ENCODE measurements at regions of chr3 and their contacts with region 1.

Region 1: GRCh38 chr3:129824926-129825541 is 68.5 kb downstream of the TMCC1 start:
- DNase-seq: peak; percentile 39 to 52
- H3K4me3 ChIP-seq: no peak overlapping the region
- H3K27ac ChIP-seq: no peak overlapping the region
- H3K4me1 ChIP-seq: peaks cover 32% of the 10 kb centered on the region
- H3K27me3 ChIP-seq: no peaks in the 10 kb centered on the region
- CTCF ChIP-seq: peak; percentile 87

Region 2: GRCh38 chr3:128665362-128666038 is 1159.5 kb before region 1 on chr3:
- CTCF ChIA-PET with region 1: no interaction called
- POLR2A ChIA-PET with region 1: no interaction called
- intact Hi-C with region 1: no loop called
- DNase-seq: no peak
- H3K4me3 ChIP-seq: peak overlapping the region; percentile 21; the same call in 1 of the 2 replicates
- H3K27ac ChIP-seq: no peak overlapping the region
- H3K4me1 ChIP-seq: no peaks in the 10 kb centered on the region
- H3K27me3 ChIP-seq: no peaks in the 10 kb centered on the region
- CTCF ChIP-seq: no peak; the same call in 1 of the 2 replicates

Region 3: GRCh38 chr3:129128357-129129155 is 696.5 kb before region 1 on chr3:
- CTCF ChIA-PET with region 1: no interaction called
- POLR2A ChIA-PET with region 1: interaction called, 19 read pairs
- intact Hi-C with region 1: no loop called
- DNase-seq: no peak
- H3K4me3 ChIP-seq: no peak overlapping the region
- H3K27ac ChIP-seq: no peak overlapping the region
- H3K4me1 ChIP-seq: no peaks in the 10 kb centered on the region
- H3K27me3 ChIP-seq: no peaks in the 10 kb centered on the region
- CTCF ChIP-seq: no peak

Region 4: DNA sequence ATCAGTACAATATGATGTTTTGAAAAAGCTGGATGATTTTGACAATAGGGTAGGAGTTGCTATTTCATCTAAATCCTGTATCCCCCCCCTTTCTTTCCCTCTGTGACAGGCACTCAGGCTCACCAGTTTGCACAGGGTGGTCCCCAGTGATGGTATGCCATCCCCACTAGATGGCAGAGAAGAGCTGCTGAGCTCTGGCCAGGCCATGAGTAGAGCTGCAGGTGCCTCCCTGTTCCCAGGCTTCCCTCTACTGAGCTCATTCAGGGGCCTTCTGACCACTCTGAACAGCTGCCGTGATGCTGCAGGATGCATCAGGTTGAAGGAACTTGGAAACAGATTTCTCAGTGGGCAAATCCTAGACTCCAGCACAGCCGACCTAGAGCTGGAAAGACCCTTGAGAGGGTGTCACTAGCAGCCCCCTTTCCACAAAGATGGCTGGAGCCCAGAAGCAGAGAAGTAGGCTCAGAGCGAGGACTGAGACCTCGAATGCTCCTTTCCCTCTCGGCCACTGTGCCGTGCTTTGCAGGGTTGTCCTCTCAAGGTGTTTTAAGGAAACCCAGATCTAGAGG is 441.7 kb before region 1 on chr3:
- CTCF ChIA-PET with region 1: no interaction called
- POLR2A ChIA-PET with region 1: no interaction called
- intact Hi-C with region 1: loop called (anchors 1 kb)
- DNase-seq: peak; percentile 49 to 66
- H3K4me3 ChIP-seq: no peak overlapping the region
- H3K27ac ChIP-seq: no peak overlapping the region
- H3K4me1 ChIP-seq: peaks cover 6% of the 10 kb centered on the region
- H3K27me3 ChIP-seq: no peaks in the 10 kb centered on the region
- CTCF ChIP-seq: peak; percentile 85

Region 5: GRCh38 chr3:129567176-129567705 is 257.8 kb before region 1 on chr3:
- CTCF ChIA-PET with region 1: interaction called, 10 read pairs
- POLR2A ChIA-PET with region 1: no interaction called
- intact Hi-C with region 1: no loop called
- DNase-seq: no peak
- H3K4me3 ChIP-seq: no peak overlapping the region
- H3K27ac ChIP-seq: no peak overlapping the region
- H3K4me1 ChIP-seq: peaks cover 9% of the 10 kb centered on the region
- H3K27me3 ChIP-seq: no peaks in the 10 kb centered on the region
- CTCF ChIP-seq: no peak

Region 6: DNA sequence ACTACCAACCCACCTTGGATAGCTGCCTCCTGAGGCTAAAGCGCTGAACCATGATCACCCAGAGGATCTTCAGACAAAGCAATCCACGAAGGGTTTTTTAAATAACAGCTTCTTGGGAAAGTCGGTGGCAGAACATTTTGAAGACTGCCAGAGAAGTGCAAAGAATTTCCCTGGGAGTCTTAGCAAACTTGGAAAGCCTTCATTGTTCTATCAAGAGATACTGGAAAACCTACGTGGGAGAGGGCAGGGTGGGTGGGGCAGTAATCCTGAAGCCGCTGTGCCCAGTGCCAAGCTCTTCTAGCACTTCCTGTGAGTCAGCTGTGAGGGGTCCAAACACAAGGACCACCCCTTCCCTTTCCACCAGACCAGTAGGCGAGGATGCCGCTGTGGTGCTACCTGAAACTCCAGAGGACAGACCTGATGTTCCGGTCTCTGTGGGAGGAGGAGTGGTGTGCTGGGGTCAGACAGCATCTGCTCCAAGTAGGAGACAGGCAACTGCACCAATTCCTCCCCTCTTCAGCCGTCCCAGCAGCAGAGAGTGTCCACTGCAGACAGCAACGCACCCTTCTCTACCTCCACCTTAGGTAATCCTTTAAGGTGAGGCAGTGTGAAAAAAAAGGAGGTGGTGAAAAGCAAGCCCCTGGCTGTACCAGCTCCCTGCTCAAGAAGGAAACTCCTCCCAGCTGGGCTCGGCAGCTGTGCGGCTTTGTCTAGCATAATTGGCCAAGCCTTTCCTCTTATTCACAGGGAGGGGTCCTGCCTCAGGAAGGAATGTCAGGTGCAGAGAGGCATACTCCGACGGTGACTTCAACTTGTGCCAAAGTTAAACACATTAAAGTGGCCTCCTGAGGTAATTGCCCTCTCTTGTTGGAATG is 30.5 kb before region 1 on chr3:
- CTCF ChIA-PET with region 1: interaction called, 4 read pairs
- POLR2A ChIA-PET with region 1: interaction called, 3 read pairs
- intact Hi-C with region 1: loop called (anchors 1 kb)
- DNase-seq: peak; percentile 93 to 99
- H3K4me3 ChIP-seq: peak overlapping the region; percentile 96
- H3K27ac ChIP-seq: peak overlapping the region; percentile 100
- H3K4me1 ChIP-seq: peaks cover 45% of the 10 kb centered on the region
- H3K27me3 ChIP-seq: no peaks in the 10 kb centered on the region
- CTCF ChIP-seq: no peak

Region 7: DNA sequence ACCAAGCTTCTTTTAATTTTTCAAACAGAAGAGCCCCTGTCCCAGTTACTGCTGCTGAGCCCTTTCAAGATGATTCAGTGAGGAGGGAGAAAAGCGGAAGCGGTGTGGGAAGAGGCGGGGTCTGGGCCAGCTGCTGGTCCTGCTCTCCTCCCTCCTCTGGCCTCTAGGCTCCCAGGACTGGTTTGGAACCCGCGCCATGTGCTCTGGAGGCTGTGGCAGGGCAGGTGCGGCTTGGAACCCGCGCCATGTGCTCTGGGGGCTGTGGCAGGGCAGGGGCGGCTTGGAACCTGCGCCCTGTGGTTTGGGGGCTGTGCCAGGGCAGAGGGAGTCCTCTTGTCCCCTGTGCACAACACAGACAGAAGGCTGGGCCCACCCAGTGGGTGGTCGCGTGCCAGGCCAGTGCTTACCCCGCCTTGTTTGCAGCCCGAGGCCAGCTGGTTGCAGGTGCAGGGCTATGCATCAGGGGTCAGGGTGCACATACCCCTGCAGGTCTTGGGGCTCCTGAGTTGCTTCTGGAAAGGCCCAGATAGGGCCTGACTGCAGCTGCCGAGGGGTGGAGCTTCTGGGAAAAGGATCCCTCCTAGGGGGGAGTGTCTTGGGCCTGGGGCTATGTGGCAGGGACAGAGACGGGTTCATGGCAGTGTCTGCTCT is 268.8 kb after region 1 on chr3:
- CTCF ChIA-PET with region 1: no interaction called
- POLR2A ChIA-PET with region 1: no interaction called
- intact Hi-C with region 1: loop called (anchors 5 kb)
- DNase-seq: peak; percentile 62 to 66
- H3K4me3 ChIP-seq: peak overlapping the region; percentile 46; the same call in 1 of the 2 replicates
- H3K27ac ChIP-seq: peak overlapping the region; percentile 77
- H3K4me1 ChIP-seq: peaks cover 26% of the 10 kb centered on the region
- H3K27me3 ChIP-seq: no peaks in the 10 kb centered on the region
- CTCF ChIP-seq: no peak